Activated B cell treated with CpG ODN at 0.5 μM for 24 hours (primary cell): ENCODE measurements at regions of chr12 and their contacts with region 1.

Region 1: GRCh38 chr12:111753144-111753881 is 13.4 kb upstream of the ALDH2 start:
- DNase-seq: no peak
- ATAC-seq: peak; percentile 43
- H3K4me3 Mint-ChIP-seq: no peak overlapping the region
- H3K27ac Mint-ChIP-seq: no peak overlapping the region
- H3K4me1 Mint-ChIP-seq: peaks cover 15% of the 10 kb centered on the region
- H3K27me3 Mint-ChIP-seq: no peaks in the 10 kb centered on the region
- CTCF ChIP-seq: peak; percentile 59

Region 2: GRCh38 chr12:111616177-111616623 is 137.1 kb before region 1 on chr12:
- CTCF ChIA-PET with region 1: no interaction called
- POLR2A ChIA-PET with region 1: no interaction called
- intact Hi-C with region 1: no loop called
- DNase-seq: no peak
- ATAC-seq: no peak
- H3K4me3 Mint-ChIP-seq: no peak overlapping the region
- H3K27ac Mint-ChIP-seq: no peak overlapping the region
- H3K4me1 Mint-ChIP-seq: no peaks in the 10 kb centered on the region
- H3K27me3 Mint-ChIP-seq: no peaks in the 10 kb centered on the region
- CTCF ChIP-seq: no peak

Region 3: DNA sequence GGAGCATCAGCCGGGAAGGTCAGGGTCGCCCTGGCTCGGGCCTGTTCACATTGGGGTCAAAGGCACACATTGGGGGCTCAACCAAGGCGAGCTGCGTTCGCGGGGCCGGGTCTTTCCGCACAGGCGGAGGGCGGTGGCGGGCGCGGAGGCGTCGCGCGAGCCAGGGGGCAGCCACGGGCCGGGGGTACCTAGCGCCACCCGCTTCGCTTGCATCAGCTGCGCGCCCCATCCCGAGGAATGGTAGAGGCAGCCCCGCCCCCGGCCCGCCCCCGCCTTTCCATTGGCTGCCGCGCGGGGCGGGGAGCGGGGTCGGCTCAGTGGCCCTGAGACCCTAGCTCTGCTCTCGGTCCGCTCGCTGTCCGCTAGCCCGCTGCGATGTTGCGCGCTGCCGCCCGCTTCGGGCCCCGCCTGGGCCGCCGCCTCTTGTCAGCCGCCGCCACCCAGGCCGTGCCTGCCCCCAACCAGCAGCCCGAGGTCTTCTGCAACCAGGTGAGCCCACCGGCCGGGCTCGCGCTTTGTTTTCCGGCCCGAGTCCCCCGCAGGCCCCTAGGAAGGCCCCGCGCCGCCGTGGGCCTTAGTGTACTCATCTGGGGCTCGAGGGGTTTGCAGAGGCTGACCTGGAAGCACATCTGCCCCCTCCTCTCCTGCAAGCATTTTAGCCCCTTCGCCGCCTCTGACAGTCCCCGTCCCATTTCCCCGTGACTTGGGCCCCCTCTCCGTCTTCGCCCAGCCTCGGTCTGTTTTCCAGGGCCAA is 13.5 kb after region 1 on chr12 and contains the start of gene ALDH2:
- CTCF ChIA-PET with region 1: interaction called, 9 read pairs
- POLR2A ChIA-PET with region 1: interaction called, 12 read pairs
- intact Hi-C with region 1: no loop called
- DNase-seq: peak; percentile 60
- ATAC-seq: peak; percentile 68
- H3K4me3 Mint-ChIP-seq: peak within 1 kb of the TSS; percentile 87
- H3K27ac Mint-ChIP-seq: peak within 1 kb of the TSS; percentile 88
- H3K4me1 Mint-ChIP-seq: peaks cover 55% of the 10 kb centered on the region
- H3K27me3 Mint-ChIP-seq: no peaks in the 10 kb centered on the region
- CTCF ChIP-seq: no peak
- total RNA-seq, gene ALDH2: 36.0 and 37.4 TPM in 2 replicates

Region 4: DNA sequence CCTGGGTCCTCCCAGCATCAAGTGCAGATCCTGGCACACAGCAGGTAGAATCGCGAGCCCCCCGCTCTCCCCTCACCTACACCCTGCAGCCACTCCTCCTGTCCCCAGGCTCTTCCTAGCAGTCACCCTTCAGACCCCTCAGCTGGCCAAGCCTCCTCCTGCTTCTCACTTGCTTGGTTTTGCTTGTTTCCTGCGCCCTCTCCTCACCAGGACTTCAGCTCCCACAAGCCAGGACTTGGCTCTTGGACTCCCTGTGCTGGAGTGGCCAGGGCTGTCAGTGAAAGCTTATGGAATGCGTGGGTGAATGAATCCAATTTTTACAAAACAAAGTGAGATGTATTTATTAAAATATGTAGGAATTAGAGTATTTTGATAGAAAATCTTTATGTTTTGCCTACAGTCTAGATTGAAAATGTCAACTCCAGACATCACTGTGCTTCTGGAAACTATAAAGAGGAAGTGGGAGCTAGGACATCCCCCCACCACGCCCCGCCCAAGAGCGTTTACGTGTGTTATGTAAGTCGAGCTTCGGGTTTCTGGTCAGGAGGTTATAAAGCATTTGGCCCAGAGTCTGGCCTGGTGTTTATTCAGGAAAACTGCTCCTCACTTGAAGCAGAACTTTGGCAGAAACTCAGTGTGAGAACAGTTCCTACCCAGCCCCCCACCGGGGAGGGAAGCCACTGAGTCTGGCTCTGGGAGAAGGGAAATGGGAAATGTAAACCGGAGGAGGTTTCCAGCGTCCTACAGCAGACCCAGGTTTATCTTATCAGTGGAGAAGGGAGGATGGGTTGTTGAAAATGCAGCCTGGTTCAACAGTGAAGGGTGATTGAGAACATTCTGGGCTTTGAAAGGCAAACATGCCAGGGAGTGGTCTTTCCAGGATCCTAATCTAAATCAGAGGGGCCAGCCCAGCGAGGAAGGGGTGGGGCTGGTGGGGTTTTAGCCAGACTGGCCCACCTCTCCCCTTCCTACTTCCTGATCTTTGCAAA is 22.2 kb after region 1 on chr12:
- CTCF ChIA-PET with region 1: interaction called, 12 read pairs
- POLR2A ChIA-PET with region 1: interaction called, 32 read pairs
- intact Hi-C with region 1: no loop called
- DNase-seq: peak; percentile 75
- ATAC-seq: peak; percentile 96
- H3K4me3 Mint-ChIP-seq: peak overlapping the region; percentile 82
- H3K27ac Mint-ChIP-seq: peak overlapping the region; percentile 99
- H3K4me1 Mint-ChIP-seq: peaks cover 40% of the 10 kb centered on the region
- H3K27me3 Mint-ChIP-seq: no peaks in the 10 kb centered on the region
- CTCF ChIP-seq: no peak

Region 5: GRCh38 chr12:111788178-111788654 is 34.9 kb after region 1 on chr12:
- CTCF ChIA-PET with region 1: interaction called, 57 read pairs
- POLR2A ChIA-PET with region 1: interaction called, 4 read pairs
- intact Hi-C with region 1: loop called (anchors 1 kb)
- DNase-seq: no peak
- ATAC-seq: no peak
- H3K4me3 Mint-ChIP-seq: no peak overlapping the region
- H3K27ac Mint-ChIP-seq: no peak overlapping the region
- H3K4me1 Mint-ChIP-seq: no peaks in the 10 kb centered on the region
- H3K27me3 Mint-ChIP-seq: no peaks in the 10 kb centered on the region
- CTCF ChIP-seq: no peak

Region 6: GRCh38 chr12:111812881-111813741 is 59.8 kb after region 1 on chr12:
- CTCF ChIA-PET with region 1: interaction called, 146 read pairs
- POLR2A ChIA-PET with region 1: interaction called, 10 read pairs
- intact Hi-C with region 1: loop called (anchors 1 kb)
- DNase-seq: peak; percentile 43
- ATAC-seq: peak; percentile 99
- H3K4me3 Mint-ChIP-seq: no peak overlapping the region
- H3K27ac Mint-ChIP-seq: no peak overlapping the region
- H3K4me1 Mint-ChIP-seq: peaks cover 5% of the 10 kb centered on the region
- H3K27me3 Mint-ChIP-seq: no peaks in the 10 kb centered on the region
- CTCF ChIP-seq: peak; percentile 77

Region 7: DNA sequence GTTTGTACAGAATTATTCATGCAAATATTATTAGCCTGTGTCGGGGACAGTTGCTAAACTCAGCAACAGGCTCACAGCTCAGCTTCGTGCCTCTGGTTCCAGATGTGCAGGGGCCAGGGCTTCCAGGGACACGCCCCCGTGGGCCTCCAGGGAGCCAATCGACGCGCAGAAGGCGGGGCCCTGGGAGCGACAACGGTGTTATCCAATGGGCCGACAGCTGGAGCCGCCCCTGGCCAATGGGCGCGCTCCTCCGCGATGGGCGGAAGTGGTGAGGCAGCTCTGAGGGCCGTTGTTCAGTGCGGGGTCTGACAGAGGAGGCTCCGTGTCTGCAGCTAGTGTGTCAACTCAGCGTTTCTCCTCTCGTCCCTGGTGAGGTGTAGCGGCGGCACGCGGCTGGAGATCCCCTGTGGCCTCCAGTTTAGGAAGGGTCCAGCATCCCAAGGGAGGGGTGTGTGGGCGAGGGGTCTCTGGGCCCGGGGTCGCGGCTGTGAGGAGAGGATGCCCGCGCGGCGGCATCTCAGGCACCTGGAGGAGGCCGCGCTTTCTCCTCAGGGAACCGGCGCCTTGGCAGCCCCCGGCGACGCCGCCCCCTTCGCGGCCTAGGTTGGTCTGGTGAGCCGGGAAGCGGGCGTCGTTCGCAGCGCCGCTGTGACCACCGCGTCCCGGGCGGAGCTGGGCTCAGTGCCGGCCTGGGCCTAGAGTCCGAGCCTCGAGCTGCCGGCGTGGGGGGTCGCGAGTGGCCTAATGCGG is 372.1 kb after region 1 on chr12 and contains the start of gene TRAFD1:
- CTCF ChIA-PET with region 1: no interaction called
- POLR2A ChIA-PET with region 1: no interaction called
- intact Hi-C with region 1: no loop called
- DNase-seq: peak; percentile 96
- ATAC-seq: peak; percentile 98
- H3K4me3 Mint-ChIP-seq: peak within 1 kb of the TSS; percentile 87
- H3K27ac Mint-ChIP-seq: peak within 1 kb of the TSS; percentile 78
- H3K4me1 Mint-ChIP-seq: peaks cover 45% of the 10 kb centered on the region
- H3K27me3 Mint-ChIP-seq: no peaks in the 10 kb centered on the region
- CTCF ChIP-seq: no peak
- total RNA-seq, gene TRAFD1: 47.8 and 51.0 TPM in 2 replicates